ENCODE measurements at regions of chr21 and their contacts with region 1.

Region 1: GRCh38 chr21:15592271-15592860 is 137.4 kb upstream of the USP25 start:
- DNase-seq: peak; percentile 6
- H3K4me3 Mint-ChIP-seq: no peak overlapping the region
- H3K27ac Mint-ChIP-seq: no peak overlapping the region
- H3K4me1 Mint-ChIP-seq: no peaks in the 10 kb centered on the region
- H3K27me3 Mint-ChIP-seq: no peaks in the 10 kb centered on the region
- CTCF ChIP-seq: no peak

Region 2: DNA sequence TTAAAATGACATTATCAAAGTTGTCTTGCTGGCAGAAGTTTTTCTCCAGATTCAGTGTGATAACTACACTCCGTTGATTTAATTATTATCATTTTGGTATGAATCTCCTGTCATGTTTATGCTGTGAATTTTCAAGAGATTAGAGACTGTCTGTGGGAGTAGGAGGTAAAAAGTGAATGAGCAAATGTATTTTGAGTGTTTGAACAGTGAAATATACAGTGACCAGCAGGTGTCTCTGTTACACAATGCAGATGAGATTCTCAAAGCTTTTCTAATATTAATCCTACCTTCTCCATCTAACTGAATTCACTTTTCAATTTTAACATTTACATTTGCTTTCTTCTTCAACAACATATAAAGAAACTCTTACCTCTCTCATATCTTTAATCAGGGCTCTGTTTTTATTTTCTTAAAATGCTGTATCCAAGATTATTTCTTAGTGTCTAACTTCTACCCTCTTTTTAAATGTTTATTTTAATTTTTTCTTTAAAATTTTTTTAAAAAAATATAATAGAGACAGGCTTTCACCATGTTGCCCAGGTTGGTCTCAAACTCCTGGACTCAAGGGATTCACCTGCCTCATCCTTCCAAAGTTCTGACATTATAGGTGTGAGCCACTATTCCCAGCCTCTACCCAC is 1188.6 kb before region 1 on chr21:
- CTCF ChIA-PET with region 1: no interaction called
- intact Hi-C with region 1: loop called (anchors 5 kb)
- DNase-seq: peak; percentile 6
- H3K4me3 Mint-ChIP-seq: no peak overlapping the region
- H3K27ac Mint-ChIP-seq: no peak overlapping the region
- H3K4me1 Mint-ChIP-seq: no peaks in the 10 kb centered on the region
- H3K27me3 Mint-ChIP-seq: no peaks in the 10 kb centered on the region
- CTCF ChIP-seq: no peak

Region 3: DNA sequence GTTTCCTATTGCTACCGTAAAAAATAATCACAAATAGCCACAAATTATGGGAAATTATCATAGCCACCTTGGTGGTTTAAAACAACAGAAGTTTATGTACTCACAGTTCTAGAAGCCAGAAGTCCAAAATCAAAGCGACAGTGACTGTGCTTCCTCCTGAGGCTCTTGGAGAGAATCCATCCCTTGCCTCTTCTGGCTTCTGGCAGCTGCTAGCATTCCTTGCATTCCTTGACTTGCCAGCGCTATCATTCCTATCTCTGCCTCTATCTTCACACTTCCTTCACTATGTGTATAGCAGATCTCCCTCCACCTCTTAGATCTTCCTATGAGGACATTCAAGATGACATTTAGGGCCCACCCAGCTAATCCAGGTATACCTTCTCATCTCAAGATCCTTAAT is 42.7 kb before region 1 on chr21:
- CTCF ChIA-PET with region 1: no interaction called
- intact Hi-C with region 1: no loop called
- DNase-seq: no peak
- H3K4me3 Mint-ChIP-seq: no peak overlapping the region
- H3K27ac Mint-ChIP-seq: no peak overlapping the region
- H3K4me1 Mint-ChIP-seq: no peaks in the 10 kb centered on the region
- H3K27me3 Mint-ChIP-seq: no peaks in the 10 kb centered on the region
- CTCF ChIP-seq: no peak